ENCODE measurements at regions of chrX and their contacts with region 1.

Region 1: DNA sequence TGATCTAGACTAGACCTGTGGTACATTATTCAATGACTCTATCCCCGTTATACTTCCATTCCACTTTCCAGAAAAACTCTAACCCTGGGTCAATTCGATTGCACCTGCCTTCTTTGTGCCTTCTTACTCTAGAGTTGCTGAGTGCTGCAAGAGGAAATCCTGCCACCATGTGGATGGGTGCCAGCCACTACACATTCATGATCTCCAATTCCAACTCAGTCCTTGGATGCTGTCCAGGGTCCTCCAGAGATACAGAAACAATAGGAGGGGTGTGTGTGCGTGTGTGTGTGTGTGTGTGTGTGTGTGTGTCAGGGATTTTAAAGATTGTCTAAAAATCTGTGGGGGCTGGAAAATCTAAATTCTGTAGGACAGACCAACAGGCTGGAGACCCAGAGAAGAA is 42.9 kb upstream of the INTS6L start:
- DNase-seq: peak; percentile 61
- H3K4me3 ChIP-seq: no peak overlapping the region
- H3K27ac ChIP-seq: no peak overlapping the region
- H3K4me1 ChIP-seq: no peaks in the 10 kb centered on the region
- H3K27me3 ChIP-seq: peaks cover 4% of the 10 kb centered on the region
- CTCF ChIP-seq: peak; percentile 38 to 73

Region 2: DNA sequence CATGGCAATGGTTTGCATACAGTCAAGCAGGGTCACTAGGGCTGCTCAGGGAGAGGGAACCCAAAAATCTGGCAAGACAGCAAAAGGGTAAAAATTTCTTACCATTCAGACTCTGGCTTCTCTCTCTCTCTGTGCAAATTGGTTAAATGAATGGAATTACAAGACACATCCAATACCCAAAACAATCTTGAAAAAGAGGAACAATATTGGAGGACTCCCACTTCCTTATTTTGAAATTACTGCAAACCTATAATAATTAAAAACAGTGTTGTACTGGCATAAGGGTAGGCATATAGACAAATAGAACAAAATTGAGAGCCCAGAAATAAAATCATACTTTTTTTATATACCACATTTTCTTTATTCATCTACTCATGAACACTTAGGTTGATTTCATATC is 201.6 kb before region 1 on chrX:
- CTCF ChIA-PET with region 1: no interaction called
- dilution Hi-C with region 1: no loop called
- in situ Hi-C with region 1: no loop called
- intact Hi-C with region 1: no loop called
- DNase-seq: no peak
- H3K4me3 ChIP-seq: no peak overlapping the region
- H3K27ac ChIP-seq: no peak overlapping the region
- H3K4me1 ChIP-seq: no peaks in the 10 kb centered on the region
- H3K27me3 ChIP-seq: no peaks in the 10 kb centered on the region
- CTCF ChIP-seq: no peak

Region 3: GRCh38 chrX:135295238-135295943 is 182.2 kb before region 1 on chrX:
- CTCF ChIA-PET with region 1: no interaction called
- dilution Hi-C with region 1: no loop called
- in situ Hi-C with region 1: no loop called
- intact Hi-C with region 1: loop called (anchors 1 kb)
- DNase-seq: no peak
- H3K4me3 ChIP-seq: no peak overlapping the region
- H3K27ac ChIP-seq: no peak overlapping the region
- H3K4me1 ChIP-seq: no peaks in the 10 kb centered on the region
- H3K27me3 ChIP-seq: no peaks in the 10 kb centered on the region
- CTCF ChIP-seq: no peak

Region 4: GRCh38 chrX:135505351-135505750 is 27.8 kb after region 1 on chrX:
- CTCF ChIA-PET with region 1: no interaction called
- dilution Hi-C with region 1: no loop called
- in situ Hi-C with region 1: no loop called
- intact Hi-C with region 1: no loop called
- DNase-seq: peak; percentile 18
- H3K4me3 ChIP-seq: no peak overlapping the region
- H3K27ac ChIP-seq: no peak overlapping the region
- H3K4me1 ChIP-seq: no peaks in the 10 kb centered on the region
- H3K27me3 ChIP-seq: no peaks in the 10 kb centered on the region
- CTCF ChIP-seq: no peak

Region 5: GRCh38 chrX:135572436-135572835 is 94.9 kb after region 1 on chrX:
- CTCF ChIA-PET with region 1: no interaction called
- dilution Hi-C with region 1: loop called (anchors 5 kb)
- in situ Hi-C with region 1: loop called (anchors 10 kb)
- intact Hi-C with region 1: no loop called
- DNase-seq: no peak
- H3K4me3 ChIP-seq: no peak overlapping the region
- H3K27ac ChIP-seq: no peak overlapping the region
- H3K4me1 ChIP-seq: no peaks in the 10 kb centered on the region
- H3K27me3 ChIP-seq: no peaks in the 10 kb centered on the region
- CTCF ChIP-seq: peak; percentile 47

Measured in mammary epithelial cell (primary cell).